ENCODE measurements at regions of chr6 and their contacts with region 1.

Region 1: DNA sequence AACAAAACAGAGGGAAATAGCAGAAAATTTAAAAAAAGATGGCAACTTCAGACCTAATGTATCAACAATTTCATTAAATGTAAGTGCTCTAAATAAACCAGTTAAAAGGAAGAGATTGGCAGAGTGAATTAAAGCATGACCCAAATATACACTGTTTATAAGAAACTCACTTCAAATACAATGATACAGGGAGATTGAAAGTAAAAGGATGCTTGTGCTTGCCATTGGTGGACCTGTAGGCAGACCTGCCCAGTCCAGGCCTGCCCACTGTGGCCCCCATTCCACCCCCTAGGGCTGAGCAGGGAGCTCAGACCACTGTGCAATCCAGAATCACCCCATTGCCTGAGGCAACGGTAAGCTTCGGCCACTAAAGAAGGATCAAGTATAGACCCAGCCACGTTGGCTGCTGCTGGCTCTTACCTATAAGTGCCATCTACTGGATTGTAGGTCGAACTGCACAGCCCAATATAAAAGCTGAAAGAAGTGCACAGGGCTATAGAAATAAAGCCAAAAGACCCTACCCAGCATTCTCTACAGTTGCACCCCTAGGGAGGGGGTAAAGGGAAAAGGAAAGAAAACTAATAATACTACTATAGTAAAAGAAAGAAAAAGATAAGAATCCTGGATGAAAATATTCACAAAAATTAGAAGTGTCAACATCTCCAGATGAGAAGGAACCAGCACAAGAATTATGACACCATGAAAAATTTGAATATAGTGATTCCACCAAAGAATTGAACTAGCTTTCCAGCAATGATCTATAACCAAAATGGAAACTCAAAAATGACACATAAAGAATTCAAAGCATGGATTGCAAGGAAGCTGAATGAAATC is 36.1 kb downstream of the PSMB1 start:
- DNase-seq: peak; percentile 65
- ATAC-seq: peak; percentile 82
- H3K4me3 ChIP-seq: no peak overlapping the region
- H3K4me3 Mint-ChIP-seq: peak overlapping the region; percentile 42
- H3K27ac ChIP-seq: no peak overlapping the region
- H3K27ac Mint-ChIP-seq: no peak overlapping the region
- H3K4me1 ChIP-seq: peaks cover 3% of the 10 kb centered on the region in 2 donors
- H3K4me1 Mint-ChIP-seq: peaks cover 4% of the 10 kb centered on the region
- H3K27me3 ChIP-seq: peaks cover 0 to 12% (median 1%) of the 10 kb centered on the region in 4 experiments
- H3K27me3 Mint-ChIP-seq: peaks cover 44% of the 10 kb centered on the region
- CTCF ChIP-seq: peak; percentile 85

Region 2: DNA sequence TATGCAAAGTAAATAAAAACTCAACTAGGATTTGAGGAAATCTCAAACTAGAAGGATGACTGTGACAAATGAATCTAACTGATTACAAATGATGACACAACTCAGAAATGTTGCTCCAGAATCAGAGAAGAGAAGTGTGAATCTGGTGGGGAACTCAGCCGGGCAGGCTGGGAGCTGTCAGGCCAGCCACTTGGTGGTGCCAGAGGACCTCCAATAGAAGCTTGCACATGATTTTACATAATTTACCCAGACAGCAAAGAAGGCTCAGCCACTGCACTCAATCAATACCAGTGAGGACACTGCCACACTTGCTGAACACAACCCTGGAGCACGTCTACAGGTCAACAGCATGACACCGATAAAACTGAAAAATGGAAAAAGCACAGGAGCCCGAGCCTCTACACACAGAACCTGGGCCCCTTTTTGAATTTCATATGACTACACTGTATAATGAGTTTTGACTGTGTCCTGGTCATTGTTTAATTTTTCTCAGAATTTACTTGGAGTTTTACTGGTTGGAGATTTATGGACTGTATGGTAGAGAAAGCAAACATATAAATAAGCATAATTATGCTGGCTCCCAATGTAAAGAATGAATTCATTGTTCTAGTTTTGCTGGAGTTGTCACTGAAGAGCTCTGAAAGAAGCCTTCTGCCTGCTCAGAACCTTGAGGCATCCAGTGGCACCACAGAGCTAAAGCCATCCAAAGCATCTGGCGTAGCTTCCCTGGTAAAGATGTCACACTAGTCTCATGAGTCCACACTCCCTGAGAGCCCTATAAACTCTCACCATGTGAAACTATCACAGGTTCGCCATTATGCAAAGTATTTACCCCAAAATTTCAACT is 1559.9 kb before region 1 on chr6:
- CTCF ChIA-PET with region 1: interaction called, 17 read pairs
- POLR2A ChIA-PET with region 1: no interaction called
- intact Hi-C with region 1: loop called (anchors 1 kb)
- DNase-seq: peak; percentile 56
- ATAC-seq: no peak
- H3K4me3 ChIP-seq: no peak overlapping the region
- H3K4me3 Mint-ChIP-seq: no peak overlapping the region
- H3K27ac ChIP-seq: no peak overlapping the region
- H3K27ac Mint-ChIP-seq: no peak overlapping the region
- H3K4me1 ChIP-seq: no peaks in the 10 kb centered on the region
- H3K4me1 Mint-ChIP-seq: no peaks in the 10 kb centered on the region
- H3K27me3 ChIP-seq: peaks cover 0 to 4% (median 0%) of the 10 kb centered on the region in 4 experiments
- H3K27me3 Mint-ChIP-seq: peaks cover 26% of the 10 kb centered on the region
- CTCF ChIP-seq: peak; percentile 71

Region 3: GRCh38 chr6:169831450-169832246 is 685.4 kb before region 1 on chr6:
- CTCF ChIA-PET with region 1: interaction called, 63 read pairs
- POLR2A ChIA-PET with region 1: no interaction called
- intact Hi-C with region 1: no loop called
- DNase-seq: peak; percentile 72
- ATAC-seq: no peak
- H3K4me3 ChIP-seq: no peak overlapping the region
- H3K4me3 Mint-ChIP-seq: no peak overlapping the region
- H3K27ac ChIP-seq: no peak overlapping the region
- H3K27ac Mint-ChIP-seq: no peak overlapping the region
- H3K4me1 ChIP-seq: peaks cover 0 to 6% of the 10 kb centered on the region in 2 donors
- H3K4me1 Mint-ChIP-seq: peaks cover 1% of the 10 kb centered on the region
- H3K27me3 ChIP-seq: peaks cover 0 to 12% (median 6%) of the 10 kb centered on the region in 4 experiments
- H3K27me3 Mint-ChIP-seq: peaks cover 28% of the 10 kb centered on the region
- CTCF ChIP-seq: peak; percentile 87

Region 4: GRCh38 chr6:170506446-170506845 is 10.6 kb before region 1 on chr6:
- CTCF ChIA-PET with region 1: interaction called, 16 read pairs
- POLR2A ChIA-PET with region 1: no interaction called
- intact Hi-C with region 1: no loop called
- DNase-seq: no peak
- ATAC-seq: no peak
- H3K4me3 ChIP-seq: no peak overlapping the region
- H3K4me3 Mint-ChIP-seq: no peak overlapping the region
- H3K27ac ChIP-seq: no peak overlapping the region
- H3K27ac Mint-ChIP-seq: no peak overlapping the region
- H3K4me1 ChIP-seq: no peaks in the 10 kb centered on the region
- H3K4me1 Mint-ChIP-seq: no peaks in the 10 kb centered on the region
- H3K27me3 ChIP-seq: peaks cover 0 to 14% (median 2%) of the 10 kb centered on the region in 4 experiments
- H3K27me3 Mint-ChIP-seq: peaks cover 27% of the 10 kb centered on the region
- CTCF ChIP-seq: no peak